ENCODE measurements at regions of chr9 and their contacts with region 1.

Region 1: DNA sequence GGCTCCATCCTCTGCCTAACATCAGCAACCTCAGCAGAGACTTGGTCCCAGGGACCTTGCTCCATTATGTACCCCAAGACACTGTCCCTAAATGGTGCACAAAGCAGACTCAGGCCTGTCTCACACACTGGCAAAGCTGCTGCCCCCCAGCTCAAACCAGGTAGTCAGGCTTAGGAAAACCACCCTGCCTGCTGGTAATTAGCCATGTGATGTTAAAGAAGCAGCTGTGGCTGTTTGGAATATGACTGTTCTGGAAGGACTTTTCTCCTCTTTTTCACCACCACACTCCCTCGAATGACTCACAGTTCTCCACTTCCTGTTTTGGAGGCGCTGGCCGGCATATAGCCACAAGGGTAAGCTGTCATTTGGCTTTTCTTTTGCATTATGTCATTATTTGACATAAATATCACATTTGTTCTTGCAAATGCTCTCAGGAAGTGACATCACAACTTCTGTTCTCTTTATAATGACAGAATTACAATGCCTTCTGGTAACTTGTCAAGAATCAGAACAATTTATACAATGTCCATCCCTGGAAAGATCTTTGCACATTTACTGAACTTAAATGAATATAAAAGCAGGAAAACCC is 113.9 kb downstream of the SUSD1 start:
- DNase-seq: peak; percentile 68 to 93
- H3K4me3 ChIP-seq: no peak overlapping the region
- H3K27ac ChIP-seq: peak overlapping the region; percentile 53
- H3K4me1 ChIP-seq: peaks cover 39% of the 10 kb centered on the region
- H3K27me3 ChIP-seq: no peaks in the 10 kb centered on the region
- CTCF ChIP-seq: no peak

Region 2: GRCh38 chr9:111857609-111858211 is 203.5 kb before region 1 on chr9:
- CTCF ChIA-PET with region 1: no interaction called
- POLR2A ChIA-PET with region 1: no interaction called
- intact Hi-C with region 1: loop called (anchors 1 kb)
- DNase-seq: peak; percentile 62 to 94
- H3K4me3 ChIP-seq: peak overlapping the region; percentile 15; the same call in 1 of the 2 replicates
- H3K27ac ChIP-seq: peak overlapping the region; percentile 67
- H3K4me1 ChIP-seq: peaks cover 31% of the 10 kb centered on the region
- H3K27me3 ChIP-seq: no peaks in the 10 kb centered on the region
- CTCF ChIP-seq: no peak

Region 3: GRCh38 chr9:111957856-111958652 is 103.2 kb before region 1 on chr9:
- CTCF ChIA-PET with region 1: no interaction called
- POLR2A ChIA-PET with region 1: interaction called, 5 read pairs
- intact Hi-C with region 1: loop called (anchors 2 kb)
- DNase-seq: peak; percentile 68 to 96
- H3K4me3 ChIP-seq: peak overlapping the region; percentile 7; the same call in 1 of the 2 replicates
- H3K27ac ChIP-seq: peak overlapping the region; percentile 83
- H3K4me1 ChIP-seq: peaks cover 35% of the 10 kb centered on the region
- H3K27me3 ChIP-seq: no peaks in the 10 kb centered on the region
- CTCF ChIP-seq: no peak

Region 4: DNA sequence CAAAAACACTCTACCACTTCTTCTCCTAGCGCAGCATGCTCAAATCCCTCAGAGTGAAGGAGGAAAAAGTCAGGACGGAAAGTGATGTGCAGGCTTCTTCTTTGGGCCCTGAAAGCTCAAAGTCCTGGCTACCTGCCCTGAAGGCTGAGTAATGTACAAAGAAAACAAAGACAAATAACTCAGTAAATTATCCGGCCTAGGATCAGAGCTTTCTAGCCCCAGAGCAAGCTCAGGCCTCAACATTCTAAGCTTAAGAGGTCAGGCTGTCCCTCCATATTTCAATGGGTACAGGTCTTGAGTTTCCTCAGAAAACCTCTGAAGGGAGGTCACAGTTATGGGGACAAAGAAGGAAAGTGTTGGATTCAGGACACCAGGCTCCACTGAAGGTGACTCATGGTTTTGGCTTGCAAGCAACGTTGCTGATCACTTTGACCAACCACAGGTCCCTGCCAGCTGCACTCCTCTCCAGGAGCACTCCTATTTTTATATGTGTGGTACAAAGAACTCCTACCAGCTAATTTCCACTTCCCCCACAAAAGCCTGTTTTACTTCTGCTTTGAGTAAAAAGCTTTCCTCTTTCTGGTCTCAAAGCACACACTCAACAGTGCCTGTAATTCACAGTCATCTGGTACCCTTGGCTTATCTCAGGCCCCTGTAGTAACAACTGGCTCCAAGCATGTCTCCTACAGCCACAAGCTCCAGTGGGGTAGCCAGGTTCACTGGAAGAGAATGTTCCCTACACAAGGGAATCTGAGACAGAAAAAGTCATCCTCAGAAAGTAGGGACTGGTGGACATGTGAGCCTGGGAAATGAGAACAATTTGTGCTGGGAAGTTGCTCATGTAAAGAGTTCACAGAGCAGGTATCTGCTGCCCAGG is 49.0 kb before region 1 on chr9:
- CTCF ChIA-PET with region 1: no interaction called
- POLR2A ChIA-PET with region 1: interaction called, 4 read pairs
- intact Hi-C with region 1: loop called (anchors 1 kb)
- DNase-seq: peak; percentile 83 to 91
- H3K4me3 ChIP-seq: peak overlapping the region; percentile 3; the same call in 1 of the 2 replicates
- H3K27ac ChIP-seq: peak overlapping the region; percentile 91
- H3K4me1 ChIP-seq: peaks cover 45% of the 10 kb centered on the region
- H3K27me3 ChIP-seq: no peaks in the 10 kb centered on the region
- CTCF ChIP-seq: no peak

Region 5: DNA sequence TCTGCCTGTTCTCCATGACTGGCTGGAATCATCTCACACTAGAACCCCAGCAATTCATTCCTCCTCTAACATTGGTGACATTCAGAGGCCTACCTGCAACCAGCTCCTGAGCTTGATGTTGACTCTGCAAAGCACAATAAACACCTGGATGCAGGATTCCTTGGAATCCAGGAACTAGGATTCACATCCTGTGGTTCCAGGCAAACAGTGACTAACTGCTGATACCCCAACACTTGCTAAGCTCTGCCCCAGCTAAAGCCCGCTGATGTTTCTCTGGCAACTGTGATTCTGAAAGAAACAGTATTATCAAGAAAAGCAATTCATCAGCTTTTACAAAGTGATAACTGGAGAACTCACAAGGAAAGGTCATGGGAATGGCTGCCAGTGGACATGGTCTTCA is 84.6 kb after region 1 on chr9:
- CTCF ChIA-PET with region 1: no interaction called
- POLR2A ChIA-PET with region 1: no interaction called
- intact Hi-C with region 1: no loop called
- DNase-seq: peak; percentile 30 to 84
- H3K4me3 ChIP-seq: no peak overlapping the region
- H3K27ac ChIP-seq: peak overlapping the region; percentile 82
- H3K4me1 ChIP-seq: peaks cover 55% of the 10 kb centered on the region
- H3K27me3 ChIP-seq: no peaks in the 10 kb centered on the region
- CTCF ChIP-seq: no peak

Measured in PC-9 (cell line).